Posterior cingulate gyrus (tissue), 11 donors: ENCODE measurements at regions of chr9 and their contacts with region 1.

Region 1: GRCh38 chr9:71819115-71819739 is 50.9 kb upstream of the CEMIP2 start:
- DNase-seq: peak in 3 of 10 donors; percentile 40 to 52 (median 42)

Region 2: DNA sequence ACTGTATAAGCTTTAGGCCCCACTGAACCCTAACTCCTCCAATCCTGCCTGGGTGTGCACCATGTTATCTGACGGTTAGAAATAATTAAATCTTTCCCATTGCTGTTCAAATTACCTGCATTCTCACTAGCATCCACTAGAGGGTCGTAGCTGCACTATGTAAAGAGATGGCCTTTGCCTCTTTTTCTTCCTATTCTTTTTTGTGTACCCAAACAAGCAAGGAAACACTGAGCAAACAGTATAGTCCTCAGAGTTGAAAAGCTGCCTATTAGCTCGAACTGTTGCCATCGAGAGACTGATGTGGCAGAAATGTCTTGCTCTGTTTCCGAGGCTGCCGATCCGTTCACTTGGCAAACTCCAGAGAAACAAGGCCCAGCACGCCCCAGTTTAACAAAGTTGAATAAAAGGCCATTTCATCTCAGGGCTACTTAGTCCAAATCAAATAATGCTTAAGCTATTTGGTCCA is 534.0 kb before region 1 on chr9:
- intact Hi-C with region 1: loop called (anchors 10 kb)
- DNase-seq: peak in 8 of 10 donors; percentile 11 to 60 (median 36)